ENCODE measurements at regions of chr9 and their contacts with region 1.

Region 1: DNA sequence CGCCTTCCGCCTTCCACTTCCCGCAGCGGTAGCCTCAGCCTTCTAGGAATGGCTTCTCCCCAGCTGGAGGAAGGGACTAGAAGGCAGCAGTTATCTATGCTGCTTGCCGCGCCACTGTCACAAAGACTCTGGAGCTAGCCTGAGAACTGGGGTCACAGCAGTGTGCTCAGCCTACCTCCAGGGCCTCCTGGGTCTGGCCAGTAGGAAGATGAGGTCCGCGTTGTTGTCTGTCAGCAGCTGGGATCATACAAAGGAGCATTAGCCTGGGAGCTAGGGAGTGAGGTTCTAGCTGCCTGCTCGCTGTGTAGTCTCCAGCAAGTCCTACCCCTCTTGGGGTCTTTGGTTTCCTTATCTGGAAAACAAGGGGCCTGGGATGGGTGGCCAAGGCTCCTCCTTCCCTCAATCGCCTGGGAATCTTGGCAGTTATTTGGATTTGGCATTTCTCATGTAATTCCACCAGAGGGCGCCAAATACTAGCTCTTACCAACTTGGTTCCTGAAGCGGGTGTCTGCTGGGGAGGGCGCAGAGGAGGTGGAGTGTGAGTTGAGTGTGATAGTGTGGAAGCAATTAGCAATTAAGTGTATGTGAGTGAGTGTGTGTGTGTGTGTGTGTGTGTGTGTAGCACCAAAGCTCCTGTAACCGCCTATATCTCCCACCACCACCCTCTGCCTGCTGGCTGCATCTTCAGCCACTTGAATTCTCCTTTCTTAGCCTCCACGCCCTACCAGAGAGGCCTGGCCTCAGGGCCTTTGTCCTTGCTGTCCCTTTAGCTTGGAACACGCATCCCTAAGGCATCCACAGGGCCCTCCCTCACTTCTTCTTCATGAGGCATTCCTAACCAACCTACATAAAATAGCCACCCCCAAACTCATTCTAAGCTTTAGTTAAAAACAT is 97.1 kb downstream of the ENTREP1 start:
- DNase-seq: peak; percentile 47
- H3K4me3 ChIP-seq: no peak overlapping the region
- H3K27ac ChIP-seq: no peak overlapping the region
- H3K4me1 ChIP-seq: no peaks in the 10 kb centered on the region
- H3K27me3 ChIP-seq: peaks cover 4% of the 10 kb centered on the region
- CTCF ChIP-seq: peak; percentile 61 to 74

Region 2: DNA sequence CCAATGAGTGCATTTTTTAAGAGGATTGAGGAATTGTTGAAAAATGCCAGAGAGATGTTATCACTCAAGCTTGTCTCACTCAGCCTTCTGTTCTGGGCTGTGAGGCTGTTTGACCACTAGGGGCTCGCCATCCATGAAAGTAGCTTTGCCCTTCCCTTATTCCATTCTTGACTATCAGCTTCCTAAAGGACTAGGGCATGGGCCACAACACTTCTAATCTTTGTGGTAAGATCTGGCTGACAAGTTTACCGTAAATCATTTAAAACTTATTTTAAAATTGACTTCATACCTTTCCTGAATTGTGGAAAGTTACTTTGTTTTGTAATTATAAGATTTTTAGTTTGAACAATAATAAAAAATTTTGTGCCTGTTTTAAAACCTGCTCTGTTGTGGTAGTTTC is 198.6 kb before region 1 on chr9:
- CTCF ChIA-PET with region 1: no interaction called
- dilution Hi-C with region 1: no loop called
- in situ Hi-C with region 1: no loop called
- intact Hi-C with region 1: no loop called
- DNase-seq: peak; percentile 49
- H3K4me3 ChIP-seq: no peak overlapping the region
- H3K27ac ChIP-seq: no peak overlapping the region
- H3K4me1 ChIP-seq: no peaks in the 10 kb centered on the region
- H3K27me3 ChIP-seq: no peaks in the 10 kb centered on the region
- CTCF ChIP-seq: peak; percentile 86 to 91

Region 3: DNA sequence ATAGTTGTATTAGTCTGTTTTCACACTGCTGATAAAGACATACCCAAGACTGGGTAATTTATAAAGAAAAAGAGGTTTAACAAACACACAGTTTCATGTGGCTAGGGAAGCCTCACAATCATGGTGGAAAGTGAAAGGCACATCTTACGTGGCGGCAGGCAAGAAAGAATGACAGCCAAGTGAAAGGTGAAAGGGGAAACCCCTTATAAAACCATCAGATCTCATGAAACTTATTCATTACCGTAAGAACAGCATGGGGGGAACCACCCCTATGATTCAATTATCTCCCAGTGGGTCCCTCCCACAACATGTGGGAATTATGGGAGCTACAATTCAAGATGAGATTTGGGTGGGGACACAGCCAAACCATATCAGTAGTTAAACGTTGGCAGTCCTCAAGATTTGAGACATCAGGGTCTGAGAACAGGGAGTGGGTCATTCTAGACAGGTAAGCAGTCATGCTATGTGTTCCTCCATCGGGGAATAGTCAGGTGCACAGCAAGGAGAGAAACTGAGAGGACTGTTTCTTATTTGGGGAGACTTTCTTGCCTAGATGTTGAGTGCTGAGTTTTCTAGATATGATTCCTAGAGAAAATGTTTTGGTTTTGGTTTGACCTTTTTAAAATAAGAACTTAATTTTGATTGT is 142.9 kb before region 1 on chr9:
- CTCF ChIA-PET with region 1: no interaction called
- dilution Hi-C with region 1: no loop called
- in situ Hi-C with region 1: no loop called
- intact Hi-C with region 1: no loop called
- DNase-seq: no peak
- H3K4me3 ChIP-seq: no peak overlapping the region
- H3K27ac ChIP-seq: no peak overlapping the region
- H3K4me1 ChIP-seq: no peaks in the 10 kb centered on the region
- H3K27me3 ChIP-seq: no peaks in the 10 kb centered on the region
- CTCF ChIP-seq: no peak

Region 4: DNA sequence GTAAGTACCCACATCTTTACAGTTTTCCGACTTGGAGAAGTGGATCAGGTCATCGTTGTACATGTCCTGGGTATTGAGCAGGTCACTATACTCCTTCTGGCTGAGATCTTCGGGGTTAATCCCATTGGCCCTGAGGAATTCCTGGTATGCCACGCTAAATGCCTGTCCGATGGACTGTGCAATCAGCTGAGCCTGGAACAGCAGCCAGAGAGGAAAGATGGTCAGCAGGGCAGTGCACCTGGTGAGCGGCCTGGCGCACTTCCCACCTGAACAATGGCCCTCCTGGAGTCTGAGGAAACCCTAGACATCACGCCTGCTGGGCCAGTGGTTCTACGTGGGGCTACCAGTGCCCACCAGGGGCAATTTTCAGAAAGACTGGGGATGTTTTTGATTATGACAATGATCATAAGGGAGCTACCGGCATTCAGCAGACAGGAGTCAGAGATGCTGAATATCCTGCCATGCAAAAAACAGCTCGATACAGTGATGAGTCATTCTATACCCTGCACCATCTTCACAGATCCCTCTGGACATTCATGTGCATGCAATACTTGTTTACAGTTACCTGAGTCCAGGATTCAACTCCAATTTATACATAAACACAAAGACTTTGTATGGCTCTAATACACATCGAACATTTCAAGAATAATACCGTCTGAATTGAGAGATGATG is 30.1 kb after region 1 on chr9:
- CTCF ChIA-PET with region 1: no interaction called
- dilution Hi-C with region 1: no loop called
- in situ Hi-C with region 1: no loop called
- intact Hi-C with region 1: no loop called
- DNase-seq: no peak
- H3K4me3 ChIP-seq: no peak overlapping the region
- H3K27ac ChIP-seq: no peak overlapping the region
- H3K4me1 ChIP-seq: no peaks in the 10 kb centered on the region
- H3K27me3 ChIP-seq: no peaks in the 10 kb centered on the region
- CTCF ChIP-seq: no peak

Region 5: GRCh38 chr9:69476016-69476415 is 53.9 kb after region 1 on chr9:
- CTCF ChIA-PET with region 1: no interaction called
- dilution Hi-C with region 1: no loop called
- in situ Hi-C with region 1: no loop called
- intact Hi-C with region 1: no loop called
- DNase-seq: no peak
- H3K4me3 ChIP-seq: no peak overlapping the region
- H3K27ac ChIP-seq: no peak overlapping the region
- H3K4me1 ChIP-seq: no peaks in the 10 kb centered on the region
- H3K27me3 ChIP-seq: peaks cover 2% of the 10 kb centered on the region
- CTCF ChIP-seq: no peak

Region 6: DNA sequence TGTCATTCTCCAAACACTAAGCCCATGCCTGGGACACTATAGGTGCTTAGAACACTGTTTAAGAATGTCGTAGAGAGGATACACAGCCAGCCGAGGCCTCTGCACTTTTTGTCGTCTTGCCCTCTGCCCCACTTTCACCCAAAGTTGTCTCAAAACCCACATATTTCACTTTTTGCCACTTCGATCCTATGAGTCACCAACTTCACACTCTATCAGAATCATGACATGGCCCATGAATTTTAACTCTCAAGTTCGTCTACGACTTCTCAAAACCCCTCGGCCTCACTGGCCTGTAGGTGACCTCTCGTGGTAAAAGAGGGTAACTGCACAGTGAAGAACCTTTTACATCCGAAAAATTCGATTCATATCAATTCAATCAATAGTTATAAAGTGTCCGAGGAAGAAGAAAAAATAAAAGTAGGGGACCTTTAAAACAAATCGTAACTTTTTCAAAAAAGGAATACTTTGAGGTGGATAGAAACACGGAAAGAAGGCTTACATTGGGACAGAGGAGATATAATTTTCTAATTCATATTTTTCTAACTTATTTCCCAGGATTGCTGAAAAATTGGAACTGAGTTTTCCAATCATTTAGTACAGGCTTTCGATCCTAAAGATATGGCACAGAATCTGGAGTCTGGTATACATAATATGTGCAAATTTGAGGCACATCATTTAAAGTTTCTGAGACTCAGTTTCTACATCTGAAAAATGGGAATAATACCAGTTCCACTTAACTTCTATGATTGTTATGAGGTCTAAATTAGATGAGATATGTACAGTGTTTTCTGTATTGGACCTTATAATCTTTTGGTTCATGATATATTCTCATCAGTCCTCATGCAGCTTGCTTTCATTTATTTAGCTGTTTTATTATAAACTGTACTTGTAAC is 127.4 kb after region 1 on chr9:
- CTCF ChIA-PET with region 1: no interaction called
- dilution Hi-C with region 1: loop called (anchors 5 kb)
- in situ Hi-C with region 1: loop called in 1 of 2 experiments (anchors 10 kb)
- intact Hi-C with region 1: loop called (anchors 2 kb)
- DNase-seq: no peak
- H3K4me3 ChIP-seq: no peak overlapping the region
- H3K27ac ChIP-seq: no peak overlapping the region
- H3K4me1 ChIP-seq: no peaks in the 10 kb centered on the region
- H3K27me3 ChIP-seq: peaks cover 12% of the 10 kb centered on the region
- CTCF ChIP-seq: peak; percentile 72 to 80

Region 7: GRCh38 chr9:69759421-69760277 is 337.5 kb after region 1 on chr9 and contains the start of gene PTAR1:
- CTCF ChIA-PET with region 1: no interaction called
- dilution Hi-C with region 1: no loop called
- in situ Hi-C with region 1: no loop called
- intact Hi-C with region 1: loop called (anchors 5 kb)
- DNase-seq: peak; percentile 83
- H3K4me3 ChIP-seq: peak within 1 kb of the TSS; percentile 74 to 82 (median 77)
- H3K27ac ChIP-seq: peak within 1 kb of the TSS; percentile 70
- H3K4me1 ChIP-seq: peaks cover 5% of the 10 kb centered on the region
- H3K27me3 ChIP-seq: no peaks in the 10 kb centered on the region
- CTCF ChIP-seq: no peak
- total RNA-seq, gene PTAR1: 40.1 to 82.0 TPM

Region 8: GRCh38 chr9:69919461-69920061 is 497.4 kb after region 1 on chr9:
- CTCF ChIA-PET with region 1: no interaction called
- dilution Hi-C with region 1: no loop called
- in situ Hi-C with region 1: loop called (anchors 25 kb)
- intact Hi-C with region 1: loop called (anchors 2 kb)
- DNase-seq: peak; percentile 45
- H3K4me3 ChIP-seq: no peak overlapping the region
- H3K27ac ChIP-seq: no peak overlapping the region
- H3K4me1 ChIP-seq: peaks cover 14% of the 10 kb centered on the region
- H3K27me3 ChIP-seq: no peaks in the 10 kb centered on the region
- CTCF ChIP-seq: peak; percentile 64 to 70

Region 9: GRCh38 chr9:70111042-70111602 is 689.0 kb after region 1 on chr9:
- CTCF ChIA-PET with region 1: no interaction called
- dilution Hi-C with region 1: no loop called
- in situ Hi-C with region 1: no loop called
- intact Hi-C with region 1: loop called (anchors 5 kb)
- DNase-seq: peak; percentile 57
- H3K4me3 ChIP-seq: no peak overlapping the region
- H3K27ac ChIP-seq: peak overlapping the region; percentile 58
- H3K4me1 ChIP-seq: peaks cover 56% of the 10 kb centered on the region
- H3K27me3 ChIP-seq: no peaks in the 10 kb centered on the region
- CTCF ChIP-seq: peak; percentile 89 to 91

Measured in mammary epithelial cell (primary cell).